ENCODE measurements at regions of chr11 and their contacts with region 1.

Region 1: DNA sequence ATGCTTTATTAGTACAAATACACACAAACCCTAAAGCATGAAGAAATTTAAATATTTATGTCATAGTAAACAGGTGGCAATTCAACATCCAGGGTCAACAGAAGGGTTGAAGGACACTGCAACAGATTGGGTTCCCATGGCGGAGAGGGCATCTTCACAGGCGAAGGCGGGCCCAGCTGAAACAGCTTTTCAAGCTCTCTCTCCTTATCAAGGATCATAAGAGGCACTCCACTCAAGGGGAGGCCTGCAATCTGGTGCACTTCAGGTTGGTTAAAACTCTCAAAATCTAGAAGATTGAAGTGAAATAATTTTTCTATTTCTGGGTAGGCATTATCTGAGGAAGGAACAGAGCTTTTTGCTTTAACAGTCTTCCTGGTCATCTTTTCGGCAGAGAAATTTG is 16.8 kb upstream of the SLC22A8 start:
- DNase-seq: no peak
- H3K4me3 Mint-ChIP-seq: no peak overlapping the region
- H3K27ac Mint-ChIP-seq: no peak overlapping the region
- H3K4me1 Mint-ChIP-seq: no peaks in the 10 kb centered on the region
- H3K27me3 Mint-ChIP-seq: peaks cover 10% of the 10 kb centered on the region

Region 2: GRCh38 chr11:62988276-62988675 is 44.2 kb before region 1 on chr11:
- CTCF ChIA-PET with region 1: no interaction called
- intact Hi-C with region 1: no loop called
- DNase-seq: no peak
- H3K4me3 Mint-ChIP-seq: no peak overlapping the region
- H3K27ac Mint-ChIP-seq: no peak overlapping the region
- H3K4me1 Mint-ChIP-seq: no peaks in the 10 kb centered on the region
- H3K27me3 Mint-ChIP-seq: no peaks in the 10 kb centered on the region

Region 3: GRCh38 chr11:63212742-63213141 is 180.3 kb after region 1 on chr11:
- CTCF ChIA-PET with region 1: interaction called, 9 read pairs
- intact Hi-C with region 1: loop called (anchors 1 kb)
- DNase-seq: peak; percentile 31
- H3K4me3 Mint-ChIP-seq: no peak overlapping the region
- H3K27ac Mint-ChIP-seq: no peak overlapping the region
- H3K4me1 Mint-ChIP-seq: no peaks in the 10 kb centered on the region
- H3K27me3 Mint-ChIP-seq: peaks cover 9% of the 10 kb centered on the region

Region 4: DNA sequence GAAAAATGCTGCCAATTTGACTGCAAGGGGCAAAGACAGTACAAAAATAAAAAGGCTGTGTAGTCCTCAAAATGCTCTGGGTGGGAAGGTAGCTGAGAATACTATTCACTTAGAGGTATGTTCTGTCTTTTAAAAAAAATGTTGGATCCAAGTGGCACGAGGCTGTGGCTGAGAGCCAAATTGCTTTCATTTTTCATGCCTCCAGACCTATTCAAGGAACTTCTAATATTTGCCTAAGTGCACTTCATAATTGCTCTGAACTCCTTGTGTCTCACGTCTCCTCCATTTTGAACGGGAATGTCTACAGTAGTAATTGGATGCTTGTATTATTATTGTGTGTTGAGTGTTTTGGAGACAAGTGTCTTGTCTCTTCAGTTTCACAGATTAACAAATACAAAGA is 230.1 kb after region 1 on chr11:
- CTCF ChIA-PET with region 1: no interaction called
- intact Hi-C with region 1: no loop called
- DNase-seq: no peak
- H3K4me3 Mint-ChIP-seq: no peak overlapping the region
- H3K27ac Mint-ChIP-seq: no peak overlapping the region
- H3K4me1 Mint-ChIP-seq: no peaks in the 10 kb centered on the region
- H3K27me3 Mint-ChIP-seq: peaks cover 13% of the 10 kb centered on the region